ENCODE measurements at regions of chr2 and their contacts with region 1.

Region 1: GRCh38 chr2:197416268-197416667 is 18.6 kb downstream of the SF3B1 start:
- DNase-seq: no peak
- ATAC-seq: no peak
- H3K4me3 ChIP-seq: no peak overlapping the region
- H3K27ac ChIP-seq: no peak overlapping the region
- H3K4me1 ChIP-seq: peaks cover 2% of the 10 kb centered on the region
- H3K27me3 ChIP-seq: no peaks in the 10 kb centered on the region

Region 2: DNA sequence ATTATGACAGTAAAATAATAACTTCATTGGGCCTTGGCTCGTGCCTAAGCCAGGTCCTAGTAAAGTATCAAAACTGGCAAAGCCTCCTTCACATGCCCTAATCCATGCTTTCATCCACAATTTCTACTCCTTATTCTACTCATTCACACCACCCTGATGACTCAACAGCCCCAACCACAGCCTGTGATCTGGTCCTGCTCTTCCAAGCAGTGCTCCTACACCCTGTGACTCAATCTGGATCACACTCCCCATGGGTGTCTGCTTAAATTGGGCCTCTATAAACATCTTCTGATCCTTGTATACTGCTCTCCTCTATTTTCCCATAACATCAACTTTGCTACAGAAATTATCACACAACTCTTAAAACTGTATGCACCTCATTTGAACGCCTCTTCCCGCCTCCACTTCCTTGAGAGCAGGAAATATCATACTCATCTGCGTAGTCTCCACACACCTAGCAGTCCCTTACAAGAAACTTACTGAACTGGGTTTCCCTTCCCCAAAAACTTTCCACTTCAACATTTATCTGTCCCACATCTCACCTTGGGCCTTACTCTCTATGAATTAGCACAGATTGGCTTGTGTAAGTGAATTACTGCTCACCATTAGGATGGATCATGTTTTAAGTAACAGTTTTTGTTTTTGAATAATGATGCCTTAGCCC is 632.7 kb before region 1 on chr2:
- intact Hi-C with region 1: loop called in 1 of 4 experiments (anchors 10 kb)
- DNase-seq: no peak
- ATAC-seq: no peak
- H3K4me3 ChIP-seq: no peak overlapping the region
- H3K27ac ChIP-seq: no peak overlapping the region
- H3K4me1 ChIP-seq: no peaks in the 10 kb centered on the region
- H3K27me3 ChIP-seq: no peaks in the 10 kb centered on the region

Region 3: GRCh38 chr2:197345846-197346370 is 70.4 kb before region 1 on chr2:
- intact Hi-C with region 1: no loop called
- DNase-seq: no peak
- ATAC-seq: no peak
- H3K4me3 ChIP-seq: no peak overlapping the region
- H3K27ac ChIP-seq: no peak overlapping the region
- H3K4me1 ChIP-seq: no peaks in the 10 kb centered on the region
- H3K27me3 ChIP-seq: no peaks in the 10 kb centered on the region

Region 4: GRCh38 chr2:197480165-197481036 is 64.1 kb after region 1 on chr2:
- intact Hi-C with region 1: loop called in 1 of 4 experiments (anchors 10 kb)
- DNase-seq: no peak
- ATAC-seq: peak in 1 of 2 donors; percentile 30
- H3K4me3 ChIP-seq: no peak overlapping the region
- H3K27ac ChIP-seq: no peak overlapping the region
- H3K4me1 ChIP-seq: no peaks in the 10 kb centered on the region
- H3K27me3 ChIP-seq: no peaks in the 10 kb centered on the region

Region 5: GRCh38 chr2:197499594-197500526 is 83.6 kb after region 1 on chr2 and contains the starts of genes HSPD1 and HSPE1:
- intact Hi-C with region 1: loop called in 2 of 4 experiments (anchors 10 kb)
- DNase-seq: peak; percentile 98 to 99 (median 99)
- ATAC-seq: peak; percentile 98
- H3K4me3 ChIP-seq: peak within 1 kb of the TSS; percentile 81
- H3K27ac ChIP-seq: peak within 1 kb of the TSS; percentile 91
- H3K4me1 ChIP-seq: peaks cover 4% of the 10 kb centered on the region
- H3K27me3 ChIP-seq: no peaks in the 10 kb centered on the region
- total RNA-seq, gene HSPD1: 111 to 182 (median 159) TPM
- total RNA-seq, gene HSPE1: 96.3 to 156 (median 128) TPM

Region 6: GRCh38 chr2:197556456-197556855 is 140.2 kb after region 1 on chr2:
- intact Hi-C with region 1: no loop called
- DNase-seq: no peak
- ATAC-seq: peak; percentile 59 to 60
- H3K4me3 ChIP-seq: no peak overlapping the region
- H3K27ac ChIP-seq: no peak overlapping the region
- H3K4me1 ChIP-seq: no peaks in the 10 kb centered on the region
- H3K27me3 ChIP-seq: no peaks in the 10 kb centered on the region

Region 7: GRCh38 chr2:197700960-197701359 is 284.7 kb after region 1 on chr2:
- intact Hi-C with region 1: no loop called
- DNase-seq: no peak
- ATAC-seq: no peak
- H3K4me3 ChIP-seq: no peak overlapping the region
- H3K27ac ChIP-seq: no peak overlapping the region
- H3K4me1 ChIP-seq: peaks cover under 1% of the 10 kb centered on the region
- H3K27me3 ChIP-seq: no peaks in the 10 kb centered on the region

Measured in right cardiac atrium (tissue), 5 donors.